PC-9 (cell line): ENCODE measurements at regions of chr5 and their contacts with region 1.

Region 1: DNA sequence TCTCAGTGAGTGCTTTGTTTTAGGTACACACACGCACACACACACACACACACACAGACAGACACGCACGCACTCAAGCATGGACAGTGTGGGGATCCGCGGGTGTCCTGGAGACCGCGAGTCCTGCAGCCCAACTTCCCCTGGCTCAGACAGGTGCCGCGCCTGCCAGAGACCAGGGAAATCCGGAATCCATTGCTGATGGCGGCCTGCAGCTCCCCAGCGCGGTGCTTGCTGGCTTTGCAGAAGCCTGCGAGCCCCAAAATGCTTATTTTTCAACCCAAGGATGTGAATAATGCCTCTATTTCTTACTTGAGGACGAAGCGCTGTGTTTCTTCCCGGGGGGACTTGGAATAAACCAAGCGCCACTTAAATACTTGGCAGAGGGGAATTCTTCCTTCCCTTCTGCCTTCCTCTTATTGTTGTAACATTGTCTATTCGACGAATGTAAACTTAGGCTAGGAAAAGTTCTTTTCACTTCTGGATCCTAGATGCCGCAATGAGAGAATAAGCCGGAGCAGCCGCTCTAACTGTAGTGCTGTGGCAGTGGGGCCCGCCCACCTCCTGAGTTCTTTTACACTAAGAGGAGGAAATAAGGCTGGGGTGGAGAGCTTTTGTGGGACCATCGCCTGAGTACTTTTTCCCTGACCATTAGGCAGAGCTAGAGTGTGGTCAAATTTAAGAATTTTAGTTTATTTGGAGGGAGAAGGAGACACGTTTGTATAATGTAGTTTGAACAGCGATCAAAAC is 802 bp downstream of the ITGA2 start:
- DNase-seq: peak in 1 of 2 experiments; percentile 25
- H3K4me3 ChIP-seq: peak overlapping the region; percentile 91
- H3K27ac ChIP-seq: peak overlapping the region; percentile 95
- H3K4me1 ChIP-seq: peaks cover 75% of the 10 kb centered on the region
- H3K27me3 ChIP-seq: no peaks in the 10 kb centered on the region
- CTCF ChIP-seq: peak; percentile 40

Region 2: GRCh38 chr5:52787600-52788504 is 202.1 kb before region 1 on chr5 and contains the starts of genes ITGA1 and PELO:
- CTCF ChIA-PET with region 1: no interaction called
- POLR2A ChIA-PET with region 1: no interaction called
- intact Hi-C with region 1: loop called (anchors 5 kb)
- DNase-seq: peak; percentile 65
- H3K4me3 ChIP-seq: peak within 1 kb of the TSS; percentile 67
- H3K27ac ChIP-seq: peak within 1 kb of the TSS; percentile 30
- H3K4me1 ChIP-seq: peaks cover 29% of the 10 kb centered on the region
- H3K27me3 ChIP-seq: no peaks in the 10 kb centered on the region
- CTCF ChIP-seq: no peak; the same call in 1 of the 2 replicates
- total RNA-seq, gene ITGA1: 3.0 and 4.0 TPM in 2 replicates
- total RNA-seq, gene PELO: 19.8 and 21.5 TPM in 2 replicates

Region 3: GRCh38 chr5:52948418-52949076 is 41.4 kb before region 1 on chr5:
- CTCF ChIA-PET with region 1: interaction called, 16 read pairs
- POLR2A ChIA-PET with region 1: interaction called, 3 read pairs
- intact Hi-C with region 1: loop called (anchors 2 kb)
- DNase-seq: peak; percentile 65 to 69
- H3K4me3 ChIP-seq: no peak overlapping the region
- H3K27ac ChIP-seq: no peak overlapping the region
- H3K4me1 ChIP-seq: peaks cover 13% of the 10 kb centered on the region
- H3K27me3 ChIP-seq: no peaks in the 10 kb centered on the region
- CTCF ChIP-seq: peak; percentile 92

Region 4: DNA sequence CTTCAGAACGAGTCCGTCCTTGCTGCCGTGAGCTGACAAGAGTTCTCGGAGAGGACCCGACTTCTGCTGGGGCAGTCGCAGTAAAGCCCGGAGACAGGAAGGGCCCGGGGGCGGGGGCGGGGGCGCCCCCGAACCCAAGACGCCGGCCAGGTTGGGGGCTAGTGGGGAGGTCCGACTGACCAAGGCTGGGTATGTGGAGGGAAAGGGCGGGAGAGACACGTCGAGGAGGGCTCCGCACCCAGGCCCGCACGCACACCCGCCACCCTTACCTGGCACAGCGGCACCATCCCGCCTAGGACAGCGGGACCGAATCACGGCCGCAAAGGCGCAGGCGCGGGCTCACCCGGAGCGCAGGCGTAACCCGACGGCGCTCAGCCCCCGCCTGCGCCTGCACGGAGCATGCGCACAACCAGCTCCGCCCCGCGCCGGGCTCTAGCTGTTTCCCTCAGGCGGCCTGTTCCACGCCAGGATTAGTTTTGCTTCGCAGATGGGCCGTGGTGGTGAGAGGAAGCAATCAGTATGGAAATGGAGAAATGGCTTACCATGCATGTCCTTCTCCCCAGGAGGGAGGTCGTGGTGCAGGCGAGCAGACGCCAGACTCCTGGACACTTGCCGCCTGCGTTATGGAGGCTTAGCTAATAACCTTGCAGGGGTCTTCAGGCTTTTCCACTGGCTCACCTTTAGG is 119.6 kb after region 1 on chr5 and contains the start of gene MOCS2:
- CTCF ChIA-PET with region 1: no interaction called
- POLR2A ChIA-PET with region 1: interaction called, 16 read pairs
- intact Hi-C with region 1: no loop called
- DNase-seq: peak; percentile 74 to 88
- H3K4me3 ChIP-seq: peak within 1 kb of the TSS; percentile 67
- H3K27ac ChIP-seq: no peak within 1 kb of the TSS
- H3K4me1 ChIP-seq: peaks cover 18% of the 10 kb centered on the region
- H3K27me3 ChIP-seq: no peaks in the 10 kb centered on the region
- CTCF ChIP-seq: no peak
- total RNA-seq, gene MOCS2: 23.6 and 24.4 TPM in 2 replicates

Region 5: DNA sequence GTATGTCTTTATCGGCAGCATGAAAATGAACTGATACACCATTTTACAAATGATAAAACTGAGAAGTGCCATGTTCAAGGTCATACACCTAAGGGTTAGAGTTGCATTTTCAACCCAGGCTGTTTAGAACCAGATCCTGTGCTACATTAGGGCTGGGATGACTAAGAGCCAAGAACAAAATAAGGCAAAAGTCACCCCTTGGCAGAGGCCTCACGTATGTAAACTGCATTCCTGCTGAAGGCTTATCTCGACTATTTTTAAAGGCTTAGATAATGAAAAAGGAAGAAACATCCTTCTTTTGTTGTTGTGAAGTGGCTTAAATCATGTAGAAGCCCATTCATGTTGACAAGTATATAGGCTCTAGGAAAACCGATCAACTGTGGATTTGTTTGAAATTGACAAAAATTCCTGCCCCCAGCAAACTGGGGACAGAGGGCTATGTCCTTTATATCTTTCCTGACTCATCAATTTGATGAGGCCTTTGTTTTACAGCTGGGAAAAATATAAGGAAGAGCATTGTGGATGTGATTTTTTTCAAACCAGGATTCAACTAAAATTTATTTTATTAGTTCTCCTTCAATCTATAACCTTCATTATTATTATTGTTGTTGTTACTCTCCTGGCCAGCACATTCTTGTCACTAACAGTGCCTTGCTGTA is 1724.1 kb after region 1 on chr5:
- CTCF ChIA-PET with region 1: interaction called, 12 read pairs
- POLR2A ChIA-PET with region 1: no interaction called
- intact Hi-C with region 1: no loop called
- DNase-seq: no peak
- H3K4me3 ChIP-seq: no peak overlapping the region
- H3K27ac ChIP-seq: no peak overlapping the region
- H3K4me1 ChIP-seq: no peaks in the 10 kb centered on the region
- H3K27me3 ChIP-seq: no peaks in the 10 kb centered on the region
- CTCF ChIP-seq: no peak